Natural killer cell (primary cell): ENCODE measurements at regions of chr16 and their contacts with region 1.

Region 1: GRCh38 chr16:17369421-17370222 is 101.1 kb downstream of the XYLT1 start:
- DNase-seq: peak; percentile 68 to 92
- ATAC-seq: peak; percentile 80 to 92 (median 88)
- H3K4me3 ChIP-seq: peak overlapping the region; percentile 8
- H3K4me3 Mint-ChIP-seq: peak overlapping the region; percentile 94
- H3K27ac ChIP-seq: peak overlapping the region; percentile 92
- H3K27ac Mint-ChIP-seq: peak overlapping the region; percentile 96 to 99
- H3K4me1 ChIP-seq: peaks cover 75% of the 10 kb centered on the region
- H3K4me1 Mint-ChIP-seq: peaks cover 89 to 96% of the 10 kb centered on the region in 2 donors
- H3K27me3 ChIP-seq: no peaks in the 10 kb centered on the region
- H3K27me3 Mint-ChIP-seq: no peaks in the 10 kb centered on the region
- CTCF ChIP-seq: no peak

Region 2: GRCh38 chr16:17171250-17172143 is 198.1 kb before region 1 on chr16:
- intact Hi-C with region 1: no loop called
- DNase-seq: no peak
- ATAC-seq: no peak
- H3K4me3 ChIP-seq: no peak overlapping the region
- H3K4me3 Mint-ChIP-seq: no peak overlapping the region
- H3K27ac ChIP-seq: no peak overlapping the region
- H3K27ac Mint-ChIP-seq: peak overlapping the region in 1 of 2 donors; percentile 5
- H3K4me1 ChIP-seq: peaks cover 11% of the 10 kb centered on the region
- H3K4me1 Mint-ChIP-seq: peaks cover 24% of the 10 kb centered on the region in 2 donors
- H3K27me3 ChIP-seq: no peaks in the 10 kb centered on the region
- H3K27me3 Mint-ChIP-seq: no peaks in the 10 kb centered on the region
- CTCF ChIP-seq: no peak

Region 3: GRCh38 chr16:17224879-17225281 is 144.7 kb before region 1 on chr16:
- intact Hi-C with region 1: loop called (anchors 2 kb)
- DNase-seq: peak; percentile 63 to 66
- ATAC-seq: peak; percentile 83 to 92 (median 83)
- H3K4me3 ChIP-seq: no peak overlapping the region
- H3K4me3 Mint-ChIP-seq: peak overlapping the region; percentile 82
- H3K27ac ChIP-seq: peak overlapping the region; percentile 28
- H3K27ac Mint-ChIP-seq: peak overlapping the region; percentile 79 to 84
- H3K4me1 ChIP-seq: peaks cover 30% of the 10 kb centered on the region
- H3K4me1 Mint-ChIP-seq: peaks cover 38 to 50% of the 10 kb centered on the region in 2 donors
- H3K27me3 ChIP-seq: no peaks in the 10 kb centered on the region
- H3K27me3 Mint-ChIP-seq: no peaks in the 10 kb centered on the region
- CTCF ChIP-seq: no peak

Region 4: GRCh38 chr16:17277977-17278381 is 91.6 kb before region 1 on chr16:
- intact Hi-C with region 1: loop called (anchors 1 kb)
- DNase-seq: peak in 1 of 2 donors; percentile 37
- ATAC-seq: no peak
- H3K4me3 ChIP-seq: no peak overlapping the region
- H3K4me3 Mint-ChIP-seq: no peak overlapping the region
- H3K27ac ChIP-seq: no peak overlapping the region
- H3K27ac Mint-ChIP-seq: no peak overlapping the region
- H3K4me1 ChIP-seq: peaks cover 42% of the 10 kb centered on the region
- H3K4me1 Mint-ChIP-seq: peaks cover 61 to 64% of the 10 kb centered on the region in 2 donors
- H3K27me3 ChIP-seq: no peaks in the 10 kb centered on the region
- H3K27me3 Mint-ChIP-seq: no peaks in the 10 kb centered on the region
- CTCF ChIP-seq: no peak

Region 5: GRCh38 chr16:17467923-17468540 is 98.4 kb after region 1 on chr16:
- intact Hi-C with region 1: loop called (anchors 5 kb)
- DNase-seq: peak in 1 of 2 donors; percentile 66
- ATAC-seq: peak in 1 of 3 donors; percentile 30
- H3K4me3 ChIP-seq: no peak overlapping the region
- H3K4me3 Mint-ChIP-seq: peak overlapping the region; percentile 93
- H3K27ac ChIP-seq: no peak overlapping the region
- H3K27ac Mint-ChIP-seq: peak overlapping the region in 1 of 2 donors; percentile 85
- H3K4me1 ChIP-seq: peaks cover 34% of the 10 kb centered on the region
- H3K4me1 Mint-ChIP-seq: peaks cover 52 to 54% of the 10 kb centered on the region in 2 donors
- H3K27me3 ChIP-seq: no peaks in the 10 kb centered on the region
- H3K27me3 Mint-ChIP-seq: no peaks in the 10 kb centered on the region
- CTCF ChIP-seq: no peak